ENCODE measurements at regions of chr13 and their contacts with region 1.

Region 1: DNA sequence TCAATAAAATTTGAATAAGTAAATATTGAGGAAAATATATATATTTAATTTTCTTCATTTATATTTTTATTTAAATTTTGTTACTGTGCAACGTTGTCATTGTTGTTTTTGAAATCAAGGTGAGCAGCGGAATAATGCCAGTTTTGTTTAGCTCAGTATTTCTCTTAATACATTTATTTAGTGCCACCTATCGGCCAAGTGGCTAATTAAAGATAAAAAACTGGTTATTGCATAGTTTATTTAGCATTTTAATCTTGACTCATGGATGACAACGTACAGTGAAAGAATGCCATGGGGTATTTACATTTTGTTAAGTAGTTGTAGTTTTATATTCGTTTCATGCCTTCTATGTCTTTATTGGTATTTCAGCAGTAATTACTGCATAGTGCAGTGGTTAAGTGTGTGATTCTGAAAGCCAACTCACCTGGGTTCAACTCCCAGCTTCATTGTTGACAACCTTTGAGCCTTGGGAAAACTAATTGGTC is 265.9 kb downstream of the MYO16 start:
- DNase-seq: no peak
- ATAC-seq: no peak
- H3K4me3 Mint-ChIP-seq: no peak overlapping the region
- H3K27ac Mint-ChIP-seq: no peak overlapping the region
- H3K4me1 Mint-ChIP-seq: peaks cover 11% of the 10 kb centered on the region
- H3K27me3 Mint-ChIP-seq: peaks cover 10% of the 10 kb centered on the region

Region 2: DNA sequence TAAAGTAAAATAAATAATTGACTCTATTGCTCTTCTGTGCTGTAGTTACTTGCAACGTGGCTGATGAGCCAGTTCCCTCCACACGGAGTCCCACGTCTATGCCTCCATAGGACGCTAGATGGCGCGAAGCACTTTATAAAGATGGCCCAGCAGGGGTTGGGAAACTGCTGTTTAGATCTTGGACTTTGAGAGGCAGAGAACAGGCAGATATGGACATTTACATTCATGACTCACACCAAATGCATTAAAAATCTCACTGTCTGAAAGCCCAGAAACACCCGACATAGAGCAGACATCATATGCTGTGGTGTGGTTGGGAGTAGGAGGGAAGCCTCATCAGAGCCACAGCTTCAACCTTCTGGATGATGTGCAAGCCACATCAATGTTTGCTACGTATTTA is 1684.2 kb before region 1 on chr13:
- CTCF ChIA-PET with region 1: no interaction called
- POLR2A ChIA-PET with region 1: no interaction called
- intact Hi-C with region 1: loop called in 1 of 2 experiments (anchors 5 kb)
- DNase-seq: peak; percentile 74
- ATAC-seq: peak; percentile 77
- H3K4me3 Mint-ChIP-seq: no peak overlapping the region
- H3K27ac Mint-ChIP-seq: no peak overlapping the region
- H3K4me1 Mint-ChIP-seq: no peaks in the 10 kb centered on the region
- H3K27me3 Mint-ChIP-seq: peaks cover 4% of the 10 kb centered on the region

Region 3: GRCh38 chr13:108176685-108177274 is 718.5 kb before region 1 on chr13:
- CTCF ChIA-PET with region 1: no interaction called
- POLR2A ChIA-PET with region 1: no interaction called
- intact Hi-C with region 1: loop called in 1 of 2 experiments (anchors 5 kb)
- DNase-seq: peak; percentile 78
- ATAC-seq: peak; percentile 39
- H3K4me3 Mint-ChIP-seq: no peak overlapping the region
- H3K27ac Mint-ChIP-seq: no peak overlapping the region
- H3K4me1 Mint-ChIP-seq: no peaks in the 10 kb centered on the region
- H3K27me3 Mint-ChIP-seq: no peaks in the 10 kb centered on the region

Region 4: DNA sequence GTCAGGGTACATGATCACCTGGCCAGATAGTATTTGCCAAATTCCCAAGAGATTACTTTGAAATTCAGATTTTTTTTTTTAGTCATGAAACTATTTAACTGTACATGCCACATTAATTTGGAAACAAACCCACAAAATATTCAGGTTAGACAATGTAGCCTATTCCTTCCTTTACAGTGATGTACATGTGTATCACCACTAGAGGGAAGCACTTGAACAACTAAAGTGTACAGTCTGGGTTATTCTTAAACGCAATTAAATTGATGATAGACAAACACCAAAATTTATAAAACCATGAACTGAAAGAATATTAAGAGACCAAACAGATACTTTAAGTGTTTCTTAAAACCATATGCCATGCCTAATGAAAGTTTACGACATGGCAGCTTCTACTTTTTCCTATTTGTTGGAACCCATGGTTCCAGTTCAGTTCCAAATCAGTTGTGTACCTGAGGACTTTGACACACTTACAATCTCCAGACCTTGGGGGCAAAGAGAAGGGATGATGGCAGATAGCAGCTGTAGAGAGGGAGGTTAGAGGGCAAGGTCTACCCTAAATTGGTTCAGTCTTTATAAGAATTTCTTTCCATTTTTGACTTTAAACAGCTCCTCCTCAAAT is 572.9 kb before region 1 on chr13:
- CTCF ChIA-PET with region 1: interaction called, 9 read pairs
- POLR2A ChIA-PET with region 1: no interaction called
- intact Hi-C with region 1: loop called (anchors 1 to 2 kb)
- DNase-seq: no peak
- ATAC-seq: peak; percentile 83
- H3K4me3 Mint-ChIP-seq: no peak overlapping the region
- H3K27ac Mint-ChIP-seq: no peak overlapping the region
- H3K4me1 Mint-ChIP-seq: peaks cover 11% of the 10 kb centered on the region
- H3K27me3 Mint-ChIP-seq: peaks cover 2% of the 10 kb centered on the region

Region 5: GRCh38 chr13:108342369-108343289 is 552.6 kb before region 1 on chr13:
- CTCF ChIA-PET with region 1: interaction called, 3 read pairs
- POLR2A ChIA-PET with region 1: no interaction called
- intact Hi-C with region 1: loop called (anchors 1 to 5 kb)
- DNase-seq: no peak
- ATAC-seq: peak; percentile 51
- H3K4me3 Mint-ChIP-seq: no peak overlapping the region
- H3K27ac Mint-ChIP-seq: peak overlapping the region; percentile 11
- H3K4me1 Mint-ChIP-seq: peaks cover 11% of the 10 kb centered on the region
- H3K27me3 Mint-ChIP-seq: no peaks in the 10 kb centered on the region

Region 6: GRCh38 chr13:108533842-108534241 is 361.4 kb before region 1 on chr13:
- CTCF ChIA-PET with region 1: no interaction called
- POLR2A ChIA-PET with region 1: no interaction called
- intact Hi-C with region 1: no loop called
- DNase-seq: no peak
- ATAC-seq: no peak
- H3K4me3 Mint-ChIP-seq: no peak overlapping the region
- H3K27ac Mint-ChIP-seq: no peak overlapping the region
- H3K4me1 Mint-ChIP-seq: no peaks in the 10 kb centered on the region
- H3K27me3 Mint-ChIP-seq: peaks cover 21% of the 10 kb centered on the region

Measured in activated CD4-positive, alpha-beta T cell treated with anti-CD3 and anti-CD28 coated beads for 36 hours (primary cell).